ENCODE measurements at regions of chr7 and their contacts with region 1.

Region 1: GRCh38 chr7:12257582-12257981 is 46.5 kb downstream of the TMEM106B start:
- DNase-seq: no peak
- ATAC-seq: peak; percentile 96
- H3K4me3 Mint-ChIP-seq: no peak overlapping the region
- H3K27ac Mint-ChIP-seq: no peak overlapping the region
- H3K4me1 Mint-ChIP-seq: no peaks in the 10 kb centered on the region
- H3K27me3 Mint-ChIP-seq: no peaks in the 10 kb centered on the region
- CTCF ChIP-seq: no peak

Region 2: GRCh38 chr7:12244129-12244528 is 13.5 kb before region 1 on chr7:
- CTCF ChIA-PET with region 1: no interaction called
- POLR2A ChIA-PET with region 1: no interaction called
- intact Hi-C with region 1: loop called (anchors 2 kb)
- DNase-seq: no peak
- ATAC-seq: no peak
- H3K4me3 Mint-ChIP-seq: no peak overlapping the region
- H3K27ac Mint-ChIP-seq: no peak overlapping the region
- H3K4me1 Mint-ChIP-seq: peaks cover 21% of the 10 kb centered on the region
- H3K27me3 Mint-ChIP-seq: peaks cover 6% of the 10 kb centered on the region
- CTCF ChIP-seq: no peak

Region 3: GRCh38 chr7:13057462-13058200 is 800.0 kb after region 1 on chr7:
- CTCF ChIA-PET with region 1: no interaction called
- POLR2A ChIA-PET with region 1: no interaction called
- intact Hi-C with region 1: loop called (anchors 5 kb)
- DNase-seq: no peak
- ATAC-seq: peak; percentile 84
- H3K4me3 Mint-ChIP-seq: peak overlapping the region; percentile 82
- H3K27ac Mint-ChIP-seq: peak overlapping the region; percentile 94
- H3K4me1 Mint-ChIP-seq: peaks cover 44% of the 10 kb centered on the region
- H3K27me3 Mint-ChIP-seq: no peaks in the 10 kb centered on the region
- CTCF ChIP-seq: no peak